Mammary epithelial cell (primary cell): ENCODE measurements at regions of chr17 and their contacts with region 1.

Region 1: GRCh38 chr17:63621766-63622519 is at the start of gene MAP3K3:
- DNase-seq: peak; percentile 100
- H3K4me3 ChIP-seq: peak within 1 kb of the TSS; percentile 82 to 91 (median 87)
- H3K27ac ChIP-seq: peak within 1 kb of the TSS; percentile 47
- H3K4me1 ChIP-seq: peaks cover 24% of the 10 kb centered on the region
- H3K27me3 ChIP-seq: no peaks in the 10 kb centered on the region
- CTCF ChIP-seq: peak in 1 of 2 donors; percentile 29
- total RNA-seq, gene MAP3K3: 19.5 to 21.8 TPM

Region 2: DNA sequence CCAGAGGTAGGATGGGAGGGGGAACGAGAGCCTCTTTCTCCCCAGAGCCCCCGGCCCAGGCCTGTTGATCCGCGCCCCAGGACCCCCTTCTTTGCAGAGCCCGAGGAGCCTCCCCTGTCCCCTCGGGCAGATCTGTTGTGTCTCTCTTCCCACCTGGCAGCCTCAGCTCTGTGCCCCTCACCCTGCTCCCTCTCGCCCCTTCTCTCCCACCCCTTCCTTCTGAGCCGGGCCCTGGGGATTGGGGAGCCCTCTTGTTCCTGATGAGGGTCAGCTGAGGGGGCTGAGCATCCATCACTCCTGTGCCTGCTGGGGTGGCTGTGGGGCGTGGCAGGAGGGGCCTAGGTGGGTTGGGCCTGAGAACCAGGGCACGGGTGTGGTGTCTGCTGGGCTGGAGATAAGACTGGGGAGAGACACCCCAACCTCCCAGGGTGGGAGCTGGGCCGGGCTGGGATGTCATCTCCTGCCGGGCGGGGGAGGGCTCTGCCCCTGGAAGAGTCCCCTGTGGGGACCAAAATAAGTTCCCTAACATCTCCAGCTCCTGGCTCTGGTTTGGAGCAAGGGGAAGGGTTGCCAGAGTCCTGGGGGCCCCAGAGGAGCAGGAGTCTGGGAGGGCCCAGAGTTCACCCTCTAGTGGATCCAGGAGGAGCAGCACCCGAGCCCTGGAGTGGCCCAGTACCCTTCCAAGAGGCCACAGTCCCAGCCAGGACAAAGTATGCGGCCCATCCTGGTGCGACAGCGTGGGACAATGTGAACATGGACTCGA is 929.0 kb before region 1 on chr17:
- CTCF ChIA-PET with region 1: no interaction called
- dilution Hi-C with region 1: no loop called
- in situ Hi-C with region 1: loop called in 1 of 2 experiments (anchors 25 kb)
- intact Hi-C with region 1: no loop called
- DNase-seq: no peak
- H3K4me3 ChIP-seq: no peak overlapping the region
- H3K27ac ChIP-seq: no peak overlapping the region
- H3K4me1 ChIP-seq: peaks cover 45% of the 10 kb centered on the region
- H3K27me3 ChIP-seq: no peaks in the 10 kb centered on the region
- CTCF ChIP-seq: peak; percentile 33 to 53

Region 3: GRCh38 chr17:63445979-63446691 is 175.8 kb before region 1 on chr17 and contains the start of gene CYB561:
- CTCF ChIA-PET with region 1: interaction called, 16 read pairs
- dilution Hi-C with region 1: loop called (anchors 25 kb)
- in situ Hi-C with region 1: no loop called
- intact Hi-C with region 1: no loop called
- DNase-seq: peak; percentile 63
- H3K4me3 ChIP-seq: peak within 1 kb of the TSS; percentile 59 to 72 (median 71)
- H3K27ac ChIP-seq: peak within 1 kb of the TSS; percentile 79
- H3K4me1 ChIP-seq: peaks cover 17% of the 10 kb centered on the region
- H3K27me3 ChIP-seq: no peaks in the 10 kb centered on the region
- CTCF ChIP-seq: peak; percentile 29 to 54
- total RNA-seq, gene CYB561: 26.6 to 35.8 TPM

Region 4: DNA sequence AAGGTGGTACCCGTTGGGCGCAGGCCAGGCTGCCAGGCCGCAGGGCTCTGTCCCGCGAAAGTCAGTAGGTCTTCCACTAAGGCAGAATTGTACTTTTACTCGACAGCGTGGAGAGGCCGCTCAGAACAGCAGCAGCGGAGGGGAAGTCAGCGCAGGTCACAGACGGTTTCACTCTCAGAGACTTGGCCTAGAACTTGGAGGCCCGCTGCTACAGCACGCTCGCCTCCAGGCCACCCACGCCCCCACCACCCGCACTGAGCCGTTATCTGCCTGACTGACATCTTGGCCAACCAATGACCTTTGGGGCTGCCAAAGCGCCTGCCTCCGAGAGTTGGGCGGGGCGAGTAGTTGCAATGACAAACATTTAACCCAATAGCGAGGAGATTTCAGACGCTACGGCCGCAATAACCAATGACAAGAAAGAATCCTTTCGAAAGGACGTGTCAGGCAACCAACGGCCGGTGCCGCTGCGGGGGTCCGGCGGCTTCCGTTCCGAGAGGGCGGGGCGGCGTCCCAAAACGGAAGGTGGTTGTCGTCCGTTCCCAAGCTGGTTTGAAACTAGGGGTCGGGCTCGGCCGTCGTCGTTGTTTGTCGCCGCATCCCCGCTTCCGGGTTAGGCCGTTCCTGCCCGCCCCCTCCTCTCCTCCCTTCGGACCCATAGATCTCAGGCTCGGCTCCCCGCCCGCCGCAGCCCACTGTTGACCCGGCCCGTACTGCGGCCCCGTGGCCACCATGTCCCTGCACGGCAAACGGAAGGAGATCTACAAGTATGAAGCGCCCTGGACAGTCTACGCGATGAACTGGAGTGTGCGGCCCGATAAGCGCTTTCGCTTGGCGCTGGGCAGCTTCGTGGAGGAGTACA is 71.8 kb before region 1 on chr17 and contains the start of gene DCAF7:
- CTCF ChIA-PET with region 1: no interaction called
- dilution Hi-C with region 1: no loop called
- in situ Hi-C with region 1: no loop called
- intact Hi-C with region 1: loop called (anchors 2 kb)
- DNase-seq: peak; percentile 100
- H3K4me3 ChIP-seq: peak within 1 kb of the TSS; percentile 86 to 98 (median 95)
- H3K27ac ChIP-seq: peak within 1 kb of the TSS; percentile 70
- H3K4me1 ChIP-seq: peaks cover 27% of the 10 kb centered on the region
- H3K27me3 ChIP-seq: no peaks in the 10 kb centered on the region
- CTCF ChIP-seq: no peak
- total RNA-seq, gene DCAF7: 47.5 to 71.3 TPM

Region 5: GRCh38 chr17:63568581-63568980 is 53.4 kb before region 1 on chr17:
- CTCF ChIA-PET with region 1: no interaction called
- dilution Hi-C with region 1: loop called (anchors 5 kb)
- in situ Hi-C with region 1: no loop called
- intact Hi-C with region 1: no loop called
- DNase-seq: no peak
- H3K4me3 ChIP-seq: no peak overlapping the region
- H3K27ac ChIP-seq: no peak overlapping the region
- H3K4me1 ChIP-seq: peaks cover 7% of the 10 kb centered on the region
- H3K27me3 ChIP-seq: no peaks in the 10 kb centered on the region
- CTCF ChIP-seq: no peak

Region 6: DNA sequence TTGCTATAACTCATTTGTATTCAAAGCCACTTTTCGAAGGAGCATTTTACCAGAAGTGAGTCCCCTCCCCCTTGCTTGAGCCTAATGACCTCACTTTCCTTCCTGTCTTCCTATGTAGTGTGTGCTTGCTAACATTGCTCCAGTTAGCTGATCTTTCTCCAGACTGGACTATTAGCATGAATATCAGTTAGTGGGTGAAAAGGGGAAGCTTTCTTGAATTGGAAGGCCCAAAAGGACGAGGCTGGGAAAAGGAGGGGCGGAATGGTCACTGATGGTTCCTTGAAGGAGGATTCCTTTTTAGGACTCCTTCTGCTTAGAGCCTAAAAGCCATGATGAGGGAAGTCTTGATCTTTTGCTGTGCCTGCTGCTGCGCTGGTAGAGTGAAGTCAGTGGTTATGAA is 12.2 kb after region 1 on chr17:
- CTCF ChIA-PET with region 1: no interaction called
- dilution Hi-C with region 1: no loop called
- in situ Hi-C with region 1: no loop called
- intact Hi-C with region 1: no loop called
- DNase-seq: no peak
- H3K4me3 ChIP-seq: no peak overlapping the region
- H3K27ac ChIP-seq: no peak overlapping the region
- H3K4me1 ChIP-seq: no peaks in the 10 kb centered on the region
- H3K27me3 ChIP-seq: no peaks in the 10 kb centered on the region
- CTCF ChIP-seq: no peak

Region 7: GRCh38 chr17:63649813-63650212 is 27.9 kb after region 1 on chr17:
- CTCF ChIA-PET with region 1: no interaction called
- dilution Hi-C with region 1: no loop called
- in situ Hi-C with region 1: no loop called
- intact Hi-C with region 1: no loop called
- DNase-seq: no peak
- H3K4me3 ChIP-seq: no peak overlapping the region
- H3K27ac ChIP-seq: no peak overlapping the region
- H3K4me1 ChIP-seq: peaks cover 30% of the 10 kb centered on the region
- H3K27me3 ChIP-seq: no peaks in the 10 kb centered on the region
- CTCF ChIP-seq: no peak

Region 8: DNA sequence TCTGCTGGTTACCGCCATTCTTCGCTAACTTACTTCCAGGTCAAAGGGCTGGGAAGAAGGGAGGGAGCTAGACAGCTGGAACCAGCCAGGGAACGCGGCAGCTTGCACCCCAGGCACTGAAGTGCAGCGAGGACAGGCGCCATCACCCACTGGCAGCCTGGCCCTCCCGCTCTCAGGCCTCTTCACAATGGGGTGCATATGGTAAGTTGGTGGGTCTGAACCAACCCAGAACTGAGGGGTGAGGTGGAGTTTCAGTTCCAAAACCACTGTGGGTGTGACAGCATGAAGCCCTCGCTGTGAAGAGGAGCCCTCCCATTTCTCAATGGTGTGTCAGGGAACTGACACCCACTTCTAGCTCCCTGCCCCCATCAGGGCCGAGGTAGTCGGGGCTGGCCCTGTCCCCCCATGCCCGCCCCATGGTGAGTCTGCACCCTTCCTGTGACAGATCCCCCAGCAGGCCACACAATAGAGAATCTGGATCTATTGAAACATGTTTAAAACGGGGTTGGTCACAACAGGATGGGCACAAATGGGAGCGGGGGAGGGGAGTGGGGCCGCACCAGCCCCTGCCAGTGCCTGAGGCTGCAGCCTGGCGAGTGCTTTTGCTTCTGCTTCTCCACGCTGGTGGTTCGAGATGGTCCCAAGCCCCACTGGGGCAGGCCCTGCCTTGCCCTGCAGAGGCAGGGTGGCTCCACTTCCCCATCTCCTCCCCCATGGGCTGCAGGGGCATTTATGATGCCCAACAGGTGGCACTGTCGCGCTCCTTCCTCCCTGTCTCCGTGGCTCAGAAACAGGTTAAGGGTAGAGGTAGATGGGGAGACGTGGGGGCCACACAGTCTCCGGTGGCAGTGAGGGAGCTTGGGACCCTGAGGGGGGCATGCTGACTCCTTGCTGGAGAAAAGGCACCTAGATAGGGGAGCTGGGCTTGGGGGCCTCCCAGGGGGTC is 75.7 kb after region 1 on chr17:
- CTCF ChIA-PET with region 1: no interaction called
- dilution Hi-C with region 1: no loop called
- in situ Hi-C with region 1: no loop called
- intact Hi-C with region 1: loop called (anchors 5 kb)
- DNase-seq: peak; percentile 29
- H3K4me3 ChIP-seq: no peak overlapping the region
- H3K27ac ChIP-seq: no peak overlapping the region
- H3K4me1 ChIP-seq: no peaks in the 10 kb centered on the region
- H3K27me3 ChIP-seq: no peaks in the 10 kb centered on the region
- CTCF ChIP-seq: peak; percentile 51 to 68

Region 9: DNA sequence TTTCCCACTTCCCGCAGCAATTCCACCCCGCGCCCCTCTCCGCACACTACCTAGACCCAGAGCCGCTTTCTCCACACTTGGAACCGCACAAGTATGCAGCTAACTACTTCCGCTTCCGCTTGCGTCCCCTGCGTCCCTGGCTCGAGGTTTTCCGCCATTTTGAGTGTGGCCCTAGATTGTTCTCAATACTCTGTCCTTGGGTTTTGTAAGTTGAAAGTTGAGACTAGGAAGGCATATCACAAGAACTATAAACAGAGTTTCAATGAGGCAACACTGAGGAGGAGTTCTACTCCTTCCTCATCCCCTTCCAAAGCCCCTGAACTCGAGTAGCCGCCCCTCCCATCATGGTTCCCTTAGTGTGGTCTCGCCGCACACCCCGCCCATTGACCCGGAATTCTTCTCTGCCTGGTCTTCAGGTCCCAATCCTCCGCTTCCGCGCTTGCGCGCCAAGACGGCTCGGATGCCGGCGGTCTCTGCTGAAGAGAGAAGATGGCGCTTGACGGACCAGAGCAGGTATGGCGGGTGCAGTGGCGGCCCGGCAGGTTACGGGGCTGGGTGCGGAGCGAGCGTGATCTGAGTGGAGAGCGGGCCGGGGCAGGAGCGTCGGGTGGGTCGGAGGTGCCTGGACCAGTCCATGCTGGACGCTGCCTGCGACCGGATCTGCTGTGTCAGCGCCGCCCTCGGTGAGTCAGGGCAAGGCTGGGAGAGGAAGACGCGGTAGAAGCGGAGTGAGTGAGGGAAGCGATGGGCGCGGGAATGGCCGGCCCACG is 205.2 kb after region 1 on chr17 and contains the starts of genes FTSJ3 and PSMC5:
- CTCF ChIA-PET with region 1: no interaction called
- dilution Hi-C with region 1: no loop called
- in situ Hi-C with region 1: no loop called
- intact Hi-C with region 1: loop called (anchors 5 kb)
- DNase-seq: peak; percentile 95
- H3K4me3 ChIP-seq: peak within 1 kb of the TSS; percentile 68 to 88 (median 83)
- H3K27ac ChIP-seq: peak within 1 kb of the TSS; percentile 83
- H3K4me1 ChIP-seq: peaks cover 18% of the 10 kb centered on the region
- H3K27me3 ChIP-seq: no peaks in the 10 kb centered on the region
- CTCF ChIP-seq: peak; percentile 30 to 51
- total RNA-seq, gene FTSJ3: 39.5 to 49.0 TPM
- total RNA-seq, gene PSMC5: 44.8 to 132 TPM